B cell (primary cell): ENCODE measurements at regions of chr2 and their contacts with region 1.

Region 1: DNA sequence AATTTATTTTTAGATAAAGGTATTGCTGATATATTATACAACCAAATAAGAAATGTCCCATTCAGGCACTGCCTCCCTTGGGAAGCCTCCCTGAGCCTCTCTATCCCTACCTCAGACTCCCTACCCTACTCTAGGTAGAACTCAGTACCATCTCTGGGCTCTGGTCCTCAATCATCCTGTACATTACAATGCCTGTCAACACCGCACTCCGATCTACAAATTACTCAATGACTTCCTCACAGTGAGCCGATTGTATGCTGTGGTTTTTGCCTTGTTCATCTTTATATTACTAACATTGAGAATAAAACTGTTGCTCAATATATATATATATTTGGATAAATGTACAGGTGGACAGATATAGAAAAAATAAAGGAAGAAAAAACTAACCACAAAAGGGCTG is 207.5 kb downstream of the STK39 start:
- DNase-seq: no peak
- ATAC-seq: no peak
- H3K4me3 ChIP-seq: no peak overlapping the region
- H3K4me3 Mint-ChIP-seq: peak overlapping the region; percentile 8
- H3K27ac ChIP-seq: no peak overlapping the region
- H3K27ac Mint-ChIP-seq: no peak overlapping the region
- H3K4me1 ChIP-seq: peaks cover 21 to 32% of the 10 kb centered on the region in 2 donors
- H3K4me1 Mint-ChIP-seq: peaks cover 66% of the 10 kb centered on the region
- H3K27me3 ChIP-seq: no peaks in the 10 kb centered on the region
- H3K27me3 Mint-ChIP-seq: no peaks in the 10 kb centered on the region
- CTCF ChIP-seq: no peak

Region 2: GRCh38 chr2:167964650-167965413 is 75.1 kb before region 1 on chr2:
- CTCF ChIA-PET with region 1: no interaction called
- POLR2A ChIA-PET with region 1: no interaction called
- intact Hi-C with region 1: loop called (anchors 5 kb)
- DNase-seq: peak; percentile 8
- ATAC-seq: no peak
- H3K4me3 ChIP-seq: no peak overlapping the region
- H3K4me3 Mint-ChIP-seq: no peak overlapping the region
- H3K27ac ChIP-seq: no peak overlapping the region
- H3K27ac Mint-ChIP-seq: no peak overlapping the region
- H3K4me1 ChIP-seq: no peaks in the 10 kb centered on the region
- H3K4me1 Mint-ChIP-seq: no peaks in the 10 kb centered on the region
- H3K27me3 ChIP-seq: no peaks in the 10 kb centered on the region
- H3K27me3 Mint-ChIP-seq: no peaks in the 10 kb centered on the region
- CTCF ChIP-seq: peak; percentile 40